Calu3 (cell line): ENCODE measurements at regions of chr22 and their contacts with region 1.

Region 1: DNA sequence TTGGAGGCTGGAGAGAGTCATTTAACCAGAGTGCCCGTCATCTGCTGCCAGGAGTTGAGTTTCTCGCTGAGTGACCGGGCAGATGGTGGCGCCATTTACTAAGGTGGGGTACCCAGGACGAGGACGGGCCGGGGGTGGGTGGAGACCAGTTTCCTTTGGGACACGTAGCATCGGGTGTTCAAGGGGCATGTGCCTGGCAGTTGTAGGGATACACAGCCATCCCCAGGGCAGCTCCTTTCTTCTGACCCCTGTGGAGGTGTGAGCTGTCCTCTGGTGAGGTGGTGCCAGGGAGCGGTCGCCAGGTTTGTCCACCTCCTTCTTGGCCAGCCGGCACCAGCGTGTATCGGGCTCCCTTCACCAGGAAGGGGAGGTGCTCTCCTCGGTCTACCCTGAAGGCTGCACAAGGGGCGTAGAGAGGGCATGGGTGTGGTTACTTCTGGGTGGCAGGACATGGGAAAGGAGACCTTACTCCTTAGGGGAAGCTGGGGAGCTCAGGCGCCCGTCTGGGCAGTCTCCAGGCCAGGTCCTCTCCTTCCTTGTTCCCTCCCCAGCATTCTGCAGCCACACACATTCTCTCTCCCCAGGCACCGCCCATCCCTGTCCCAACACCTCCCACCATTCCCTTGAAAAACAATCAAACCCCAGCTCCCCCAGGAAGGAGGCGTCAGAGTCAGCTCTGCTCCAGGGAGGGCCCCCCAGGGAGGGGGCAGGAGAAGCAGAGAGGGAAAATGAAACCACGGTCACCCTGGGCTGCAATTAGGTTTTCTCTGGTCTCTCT is 10.3 kb upstream of the MB start:
- DNase-seq: peak; percentile 85
- H3K4me3 Mint-ChIP-seq: peak overlapping the region; percentile 78
- H3K27ac Mint-ChIP-seq: peak overlapping the region; percentile 96
- H3K4me1 Mint-ChIP-seq: peaks cover 61% of the 10 kb centered on the region
- H3K27me3 Mint-ChIP-seq: no peaks in the 10 kb centered on the region
- CTCF ChIP-seq: peak; percentile 43

Region 2: GRCh38 chr22:35342390-35342789 is 285.1 kb before region 1 on chr22:
- CTCF ChIA-PET with region 1: no interaction called
- intact Hi-C with region 1: no loop called
- DNase-seq: no peak
- H3K4me3 Mint-ChIP-seq: no peak overlapping the region
- H3K27ac Mint-ChIP-seq: no peak overlapping the region
- H3K4me1 Mint-ChIP-seq: no peaks in the 10 kb centered on the region
- H3K27me3 Mint-ChIP-seq: no peaks in the 10 kb centered on the region
- CTCF ChIP-seq: no peak

Region 3: GRCh38 chr22:35430897-35431322 is 196.5 kb before region 1 on chr22:
- CTCF ChIA-PET with region 1: interaction called, 11 read pairs
- intact Hi-C with region 1: loop called (anchors 1 kb)
- DNase-seq: peak; percentile 94
- H3K4me3 Mint-ChIP-seq: no peak overlapping the region
- H3K27ac Mint-ChIP-seq: no peak overlapping the region
- H3K4me1 Mint-ChIP-seq: no peaks in the 10 kb centered on the region
- H3K27me3 Mint-ChIP-seq: no peaks in the 10 kb centered on the region
- CTCF ChIP-seq: peak; percentile 97

Region 4: GRCh38 chr22:35523167-35523947 is 104.1 kb before region 1 on chr22:
- CTCF ChIA-PET with region 1: interaction called, 11 read pairs
- intact Hi-C with region 1: no loop called
- DNase-seq: no peak
- H3K4me3 Mint-ChIP-seq: no peak overlapping the region
- H3K27ac Mint-ChIP-seq: no peak overlapping the region
- H3K4me1 Mint-ChIP-seq: no peaks in the 10 kb centered on the region
- H3K27me3 Mint-ChIP-seq: peaks cover 34% of the 10 kb centered on the region
- CTCF ChIP-seq: no peak

Region 5: GRCh38 chr22:35575116-35575748 is 52.2 kb before region 1 on chr22:
- CTCF ChIA-PET with region 1: no interaction called
- intact Hi-C with region 1: no loop called
- DNase-seq: no peak
- H3K4me3 Mint-ChIP-seq: no peak overlapping the region
- H3K27ac Mint-ChIP-seq: no peak overlapping the region
- H3K4me1 Mint-ChIP-seq: no peaks in the 10 kb centered on the region
- H3K27me3 Mint-ChIP-seq: peaks cover 60% of the 10 kb centered on the region
- CTCF ChIP-seq: no peak

Region 6: GRCh38 chr22:35678836-35679235 is 51.4 kb after region 1 on chr22:
- CTCF ChIA-PET with region 1: no interaction called
- intact Hi-C with region 1: no loop called
- DNase-seq: no peak
- H3K4me3 Mint-ChIP-seq: no peak overlapping the region
- H3K27ac Mint-ChIP-seq: no peak overlapping the region
- H3K4me1 Mint-ChIP-seq: peaks cover 8% of the 10 kb centered on the region
- H3K27me3 Mint-ChIP-seq: peaks cover 13% of the 10 kb centered on the region
- CTCF ChIP-seq: no peak

Region 7: GRCh38 chr22:35728639-35729308 is 101.3 kb after region 1 on chr22:
- CTCF ChIA-PET with region 1: interaction called, 27 read pairs
- intact Hi-C with region 1: loop called (anchors 5 kb)
- DNase-seq: peak; percentile 83
- H3K4me3 Mint-ChIP-seq: no peak overlapping the region
- H3K27ac Mint-ChIP-seq: no peak overlapping the region
- H3K4me1 Mint-ChIP-seq: peaks cover 15% of the 10 kb centered on the region
- H3K27me3 Mint-ChIP-seq: peaks cover 35% of the 10 kb centered on the region
- CTCF ChIP-seq: no peak

Region 8: GRCh38 chr22:35840302-35840739 is 212.9 kb after region 1 on chr22:
- CTCF ChIA-PET with region 1: interaction called, 3 read pairs
- intact Hi-C with region 1: loop called (anchors 2 kb)
- DNase-seq: peak; percentile 84
- H3K4me3 Mint-ChIP-seq: peak overlapping the region; percentile 87
- H3K27ac Mint-ChIP-seq: peak overlapping the region; percentile 74
- H3K4me1 Mint-ChIP-seq: peaks cover 55% of the 10 kb centered on the region
- H3K27me3 Mint-ChIP-seq: no peaks in the 10 kb centered on the region
- CTCF ChIP-seq: no peak

Region 9: GRCh38 chr22:35921777-35922176 is 294.3 kb after region 1 on chr22:
- CTCF ChIA-PET with region 1: interaction called, 5 read pairs
- intact Hi-C with region 1: loop called (anchors 1 kb)
- DNase-seq: peak; percentile 79
- H3K4me3 Mint-ChIP-seq: no peak overlapping the region
- H3K27ac Mint-ChIP-seq: no peak overlapping the region
- H3K4me1 Mint-ChIP-seq: peaks cover 10% of the 10 kb centered on the region
- H3K27me3 Mint-ChIP-seq: no peaks in the 10 kb centered on the region
- CTCF ChIP-seq: peak; percentile 42

Region 10: DNA sequence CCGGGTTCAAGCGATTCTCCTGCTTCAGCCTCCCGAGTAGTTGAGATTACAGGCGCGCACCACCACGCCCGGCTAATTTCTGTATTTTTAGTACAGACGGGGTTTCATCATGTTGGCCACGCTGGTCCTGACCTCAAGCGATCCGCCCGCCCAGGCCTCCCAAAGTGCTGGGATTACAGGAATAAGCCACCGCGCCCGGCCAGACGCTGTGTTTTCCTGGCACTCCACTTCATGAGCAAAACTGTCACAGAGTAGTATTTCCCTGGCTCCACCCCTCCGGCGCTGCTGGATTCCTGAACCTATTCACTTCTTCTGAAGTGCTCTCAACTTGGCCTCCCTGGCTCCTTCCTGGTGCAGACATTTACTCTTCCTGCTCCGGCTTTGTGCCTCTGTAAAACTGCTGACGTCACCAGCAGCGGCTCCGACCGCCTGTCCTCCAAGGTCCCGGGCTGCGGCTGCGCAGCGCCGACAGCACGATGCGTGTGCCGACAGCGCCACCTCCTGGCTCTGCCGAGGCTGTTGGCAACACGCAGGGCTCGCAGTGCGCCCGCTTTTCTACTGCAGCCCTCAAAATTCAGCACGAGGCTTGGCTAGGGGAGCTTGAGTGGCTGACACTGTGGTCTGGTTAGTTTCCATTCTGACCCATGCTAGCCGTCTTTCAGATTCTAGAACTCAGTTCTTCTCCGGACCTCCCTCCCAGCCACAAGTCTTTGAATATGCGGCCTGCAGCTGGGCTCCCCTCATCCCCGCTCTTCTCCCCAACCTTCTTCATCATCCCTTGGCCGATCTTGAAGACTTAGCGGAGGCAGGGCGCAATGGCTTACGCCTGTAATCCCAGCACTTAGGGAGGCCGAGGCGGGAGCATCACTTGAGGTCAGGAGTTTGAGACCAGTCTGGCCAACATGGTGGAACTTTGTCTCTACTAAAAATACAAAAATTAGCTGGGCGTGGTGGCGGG is 496.5 kb after region 1 on chr22:
- CTCF ChIA-PET with region 1: interaction called, 3 read pairs
- intact Hi-C with region 1: loop called (anchors 1 kb)
- DNase-seq: peak; percentile 93
- H3K4me3 Mint-ChIP-seq: peak overlapping the region; percentile 67
- H3K27ac Mint-ChIP-seq: peak overlapping the region; percentile 77
- H3K4me1 Mint-ChIP-seq: no peaks in the 10 kb centered on the region
- H3K27me3 Mint-ChIP-seq: peaks cover 31% of the 10 kb centered on the region
- CTCF ChIP-seq: peak; percentile 97